Prostate gland (tissue), 2 donors: ENCODE measurements at regions of chr1 and their contacts with region 1.

Region 1: DNA sequence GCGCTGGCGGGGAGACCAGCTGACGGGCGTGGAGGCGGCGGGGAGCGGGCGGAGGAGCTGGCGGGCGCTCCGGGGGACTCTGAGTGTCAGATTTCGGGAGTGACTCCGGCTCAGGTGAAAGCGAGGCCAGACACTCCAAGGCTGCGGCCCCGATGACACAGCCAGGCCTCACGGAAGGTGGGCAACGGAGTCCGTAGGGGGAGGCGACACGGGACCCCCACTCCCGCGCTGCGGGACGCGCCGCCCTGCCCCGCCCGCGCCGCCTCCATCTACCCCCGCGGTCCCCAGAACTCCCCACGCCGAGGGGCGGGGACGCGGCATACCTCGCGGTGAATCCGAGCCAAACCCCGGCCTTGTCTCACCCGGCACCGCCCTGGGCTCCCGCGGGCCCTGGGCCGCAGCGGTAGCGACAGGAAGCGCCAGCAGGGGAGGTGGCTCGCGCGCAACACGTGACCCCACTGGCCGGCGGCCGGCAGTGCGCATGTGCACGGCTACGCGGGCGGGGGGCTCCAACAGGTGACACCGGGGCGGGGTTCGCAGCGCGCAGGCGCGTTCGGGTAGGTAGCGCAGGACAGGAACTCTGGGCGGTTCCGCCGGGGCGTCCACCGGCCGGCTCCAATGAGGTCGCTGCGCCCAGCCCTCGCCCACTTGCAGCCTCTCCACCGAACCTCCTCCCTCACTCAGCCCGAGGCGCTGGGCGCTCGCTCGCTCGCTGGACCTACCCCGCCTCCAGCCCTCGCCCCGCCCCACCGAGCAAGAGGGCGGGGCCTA is at the start of gene CC2D1B:
- DNase-seq: peak; percentile 99
- H3K4me3 ChIP-seq: peak within 1 kb of the TSS; percentile 91 to 97
- H3K27ac ChIP-seq: peak within 1 kb of the TSS; percentile 94
- H3K4me1 ChIP-seq: no peaks in the 10 kb centered on the region
- H3K27me3 ChIP-seq: no peaks in the 10 kb centered on the region
- CTCF ChIP-seq: peak; percentile 24 to 86 (median 48)
- POLR2A ChIP-seq: peak; percentile 90
- total RNA-seq, gene CC2D1B: 24.2 to 43.9 TPM

Region 2: DNA sequence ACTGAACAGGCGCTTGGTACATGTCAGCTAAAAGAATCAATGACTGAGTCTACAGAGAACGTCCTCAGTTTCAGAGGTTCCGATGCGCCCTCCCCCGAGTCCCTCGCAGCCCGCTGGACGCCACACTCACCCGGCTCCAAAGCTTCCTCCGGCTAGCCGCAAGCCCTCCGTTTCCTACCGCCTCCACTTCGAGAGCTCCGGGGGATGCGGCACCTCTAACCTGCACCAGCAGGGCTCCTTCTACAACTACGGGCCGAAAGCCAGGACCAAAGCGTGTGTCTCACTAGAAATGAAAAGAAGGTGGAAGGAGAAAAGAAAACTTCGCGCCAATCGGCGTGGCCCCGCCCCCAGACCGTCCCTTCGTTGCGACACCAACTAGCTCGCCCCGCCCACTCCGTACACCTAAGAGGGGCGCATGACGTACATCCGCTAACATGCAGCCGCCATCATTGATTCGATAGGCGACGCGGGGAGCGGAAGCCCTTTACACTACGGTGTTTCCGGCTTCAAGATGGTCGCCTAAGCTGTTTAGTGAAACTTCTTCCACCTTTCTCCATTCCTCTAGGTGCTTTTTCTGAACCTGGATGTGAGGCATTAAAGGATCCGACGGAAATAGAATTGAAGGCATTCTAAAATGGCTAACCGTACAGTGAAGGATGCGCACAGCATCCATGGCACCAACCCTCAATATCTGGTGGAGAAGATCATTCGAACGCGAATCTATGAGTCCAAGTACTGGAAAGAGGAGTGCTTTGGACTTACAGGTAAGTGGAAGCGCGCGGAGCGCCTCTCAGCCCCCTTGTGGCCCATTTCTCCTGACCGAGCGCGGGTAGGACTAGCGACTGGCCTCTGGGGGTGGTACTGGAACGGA is 38.4 kb after region 1 on chr1 and contains the starts of genes ORC1 and PRPF38A:
- intact Hi-C with region 1: loop called (anchors 2 kb)
- DNase-seq: peak; percentile 99
- H3K4me3 ChIP-seq: peak within 1 kb of the TSS; percentile 57 to 65
- H3K27ac ChIP-seq: peak within 1 kb of the TSS; percentile 83 to 85
- H3K4me1 ChIP-seq: no peaks in the 10 kb centered on the region
- H3K27me3 ChIP-seq: no peaks in the 10 kb centered on the region
- CTCF ChIP-seq: peak in 2 of 4 experiments; percentile 53 to 56
- POLR2A ChIP-seq: peak; percentile 50
- total RNA-seq, gene ORC1: 2.2 to 3.3 TPM
- total RNA-seq, gene PRPF38A: 15.3 to 24.8 TPM